Gastrocnemius medialis (tissue), 4 donors: ENCODE measurements at regions of chr1 and their contacts with region 1.

Region 1: GRCh38 chr1:202710070-202711045 is at the start of gene SYT2:
- DNase-seq: no peak
- ATAC-seq: no peak
- H3K4me3 ChIP-seq: peak within 1 kb of the TSS in 3 of 4 donors; percentile 15 to 38 (median 31)
- H3K27ac ChIP-seq: no peak within 1 kb of the TSS
- H3K4me1 ChIP-seq: peaks cover 0 to 11% of the 10 kb centered on the region in 2 donors
- H3K27me3 ChIP-seq: peaks cover 47 to 52% (median 52%) of the 10 kb centered on the region in 3 donors
- CTCF ChIP-seq: no peak
- POLR2A ChIP-seq: no peak
- total RNA-seq, gene SYT2: not detected

Region 2: GRCh38 chr1:202170726-202171125 is 539.6 kb before region 1 on chr1:
- in situ Hi-C with region 1: loop called in 1 of 4 experiments (anchors 10 kb)
- intact Hi-C with region 1: no loop called
- DNase-seq: no peak
- ATAC-seq: peak in 1 of 2 donors; percentile 22
- H3K4me3 ChIP-seq: no peak overlapping the region
- H3K27ac ChIP-seq: no peak overlapping the region
- H3K4me1 ChIP-seq: no peaks in the 10 kb centered on the region
- H3K27me3 ChIP-seq: no peaks in the 10 kb centered on the region
- CTCF ChIP-seq: no peak
- POLR2A ChIP-seq: no peak

Region 3: DNA sequence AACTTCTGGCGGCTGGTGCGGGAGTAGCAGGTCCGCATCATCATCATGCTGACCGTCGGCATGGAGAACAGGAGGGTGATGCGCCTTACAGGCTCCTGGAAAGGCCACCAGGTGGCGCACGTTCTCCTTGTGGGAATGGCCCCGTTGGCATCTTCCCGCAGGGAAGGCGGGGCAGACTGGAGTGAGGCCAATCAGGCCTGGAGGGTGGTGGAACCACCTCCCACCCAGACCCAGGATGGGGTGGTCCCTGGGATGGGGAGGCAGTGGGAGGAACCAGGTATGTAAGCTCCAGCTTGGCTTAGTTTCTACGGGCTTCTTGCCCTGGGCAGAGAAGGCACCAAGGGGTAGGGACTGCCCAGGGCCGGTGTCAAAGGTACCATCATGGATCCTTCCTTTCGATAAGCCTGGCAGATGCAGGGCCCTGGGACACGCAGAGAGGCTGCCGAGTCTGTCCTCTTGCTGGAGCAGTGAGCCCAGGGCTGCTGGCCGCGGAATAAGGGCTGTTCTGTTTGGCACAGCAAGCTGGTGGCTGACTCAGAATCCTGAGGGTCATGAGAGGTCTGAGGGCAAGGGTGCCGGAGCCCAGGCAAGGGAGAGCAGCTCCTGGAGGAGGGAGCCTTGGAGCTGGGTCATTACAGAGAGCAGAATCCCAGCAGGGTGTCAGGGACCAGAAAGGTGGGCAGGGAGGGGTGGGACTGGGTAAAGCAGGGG is 525.5 kb before region 1 on chr1:
- in situ Hi-C with region 1: loop called in 2 of 4 experiments (anchors 10 kb)
- intact Hi-C with region 1: no loop called
- DNase-seq: peak; percentile 35 to 62
- ATAC-seq: peak; percentile 66 to 68
- H3K4me3 ChIP-seq: no peak overlapping the region
- H3K27ac ChIP-seq: no peak overlapping the region
- H3K4me1 ChIP-seq: no peaks in the 10 kb centered on the region
- H3K27me3 ChIP-seq: no peaks in the 10 kb centered on the region
- CTCF ChIP-seq: peak; percentile 25 to 90 (median 68)
- POLR2A ChIP-seq: no peak

Region 4: DNA sequence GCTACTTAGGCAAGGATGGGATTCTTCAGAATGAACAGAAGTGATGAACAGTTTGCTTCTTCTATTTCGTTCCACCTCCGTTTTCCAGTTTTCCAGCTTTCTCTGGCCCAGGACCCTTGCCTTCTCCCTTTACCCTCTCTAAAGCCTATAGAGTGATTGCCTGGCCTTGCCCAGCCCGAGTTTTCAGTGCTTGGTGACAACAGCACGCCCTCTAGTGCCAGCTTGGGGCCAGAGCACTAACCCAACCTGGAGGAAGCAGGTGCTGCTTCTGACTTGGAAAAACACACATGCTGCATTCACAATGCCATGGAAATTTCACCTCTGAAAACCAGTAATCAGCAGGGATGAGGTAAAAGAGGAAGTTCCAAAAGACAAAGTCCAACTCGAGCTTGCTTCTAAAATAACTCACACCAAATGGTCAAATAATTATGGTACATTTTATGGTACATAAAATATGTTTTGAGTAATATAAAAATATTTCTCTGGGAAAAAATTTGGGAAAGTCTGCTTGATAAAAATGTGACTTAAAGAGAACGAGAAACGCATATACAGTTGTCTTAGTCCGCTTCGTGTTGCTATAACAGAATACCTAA is 394.7 kb before region 1 on chr1:
- in situ Hi-C with region 1: loop called in 1 of 4 experiments (anchors 25 kb)
- intact Hi-C with region 1: no loop called
- DNase-seq: peak; percentile 45 to 59
- ATAC-seq: peak; percentile 83 to 91
- H3K4me3 ChIP-seq: no peak overlapping the region
- H3K27ac ChIP-seq: no peak overlapping the region
- H3K4me1 ChIP-seq: peaks cover 0 to 4% of the 10 kb centered on the region in 2 donors
- H3K27me3 ChIP-seq: no peaks in the 10 kb centered on the region
- CTCF ChIP-seq: peak; percentile 70 to 91 (median 82)
- POLR2A ChIP-seq: no peak

Region 5: GRCh38 chr1:202348509-202349205 is 361.7 kb before region 1 on chr1 and contains the start of gene PPP1R12B:
- in situ Hi-C with region 1: loop called in 3 of 4 experiments (anchors 25 kb)
- intact Hi-C with region 1: loop called (anchors 10 kb)
- DNase-seq: peak; percentile 99
- ATAC-seq: peak; percentile 91
- H3K4me3 ChIP-seq: peak within 1 kb of the TSS; percentile 85 to 94 (median 86)
- H3K27ac ChIP-seq: peak within 1 kb of the TSS; percentile 89 to 97 (median 97)
- H3K4me1 ChIP-seq: peaks cover 44 to 46% of the 10 kb centered on the region in 2 donors
- H3K27me3 ChIP-seq: no peaks in the 10 kb centered on the region
- CTCF ChIP-seq: no peak
- POLR2A ChIP-seq: peak; percentile 91 to 93
- total RNA-seq, gene PPP1R12B: 127 to 207 (median 139) TPM

Region 6: GRCh38 chr1:202471246-202471645 is 239.1 kb before region 1 on chr1:
- in situ Hi-C with region 1: loop called in 1 of 4 experiments (anchors 25 kb)
- intact Hi-C with region 1: loop called (anchors 10 kb)
- DNase-seq: no peak
- ATAC-seq: no peak
- H3K4me3 ChIP-seq: no peak overlapping the region
- H3K27ac ChIP-seq: peak overlapping the region in 2 of 4 donors; percentile 25 to 32
- H3K4me1 ChIP-seq: peaks cover 37 to 41% of the 10 kb centered on the region in 2 donors
- H3K27me3 ChIP-seq: no peaks in the 10 kb centered on the region
- CTCF ChIP-seq: no peak
- POLR2A ChIP-seq: no peak

Region 7: DNA sequence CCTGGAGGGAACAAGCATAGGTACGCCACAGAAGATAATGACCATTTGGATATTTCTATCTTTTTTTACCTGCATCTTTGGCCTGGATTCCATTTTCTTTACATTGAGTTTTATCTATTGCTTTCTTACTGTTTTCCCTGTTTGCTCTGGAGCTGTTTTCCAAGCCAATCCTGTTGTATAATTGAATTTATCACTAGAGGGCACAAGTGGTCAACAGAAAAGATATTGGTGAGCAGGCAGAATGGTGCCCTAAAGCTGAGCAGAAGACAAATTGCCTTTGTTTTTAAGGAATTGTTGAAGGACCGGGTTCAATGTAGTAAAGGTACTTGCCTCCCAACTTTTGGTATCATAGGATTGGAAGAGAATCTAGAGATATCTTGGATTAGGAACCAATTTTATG is 209.1 kb before region 1 on chr1:
- in situ Hi-C with region 1: loop called in 1 of 4 experiments (anchors 25 kb)
- intact Hi-C with region 1: no loop called
- DNase-seq: no peak
- ATAC-seq: no peak
- H3K4me3 ChIP-seq: no peak overlapping the region
- H3K27ac ChIP-seq: no peak overlapping the region
- H3K4me1 ChIP-seq: peaks cover 12 to 16% of the 10 kb centered on the region in 2 donors
- H3K27me3 ChIP-seq: no peaks in the 10 kb centered on the region
- CTCF ChIP-seq: peak; percentile 31 to 50 (median 42)
- POLR2A ChIP-seq: no peak

Region 8: GRCh38 chr1:202745323-202745888 is 35.0 kb after region 1 on chr1:
- in situ Hi-C with region 1: no loop called
- intact Hi-C with region 1: no loop called
- DNase-seq: no peak
- ATAC-seq: no peak
- H3K4me3 ChIP-seq: no peak overlapping the region
- H3K27ac ChIP-seq: no peak overlapping the region
- H3K4me1 ChIP-seq: no peaks in the 10 kb centered on the region
- H3K27me3 ChIP-seq: no peaks in the 10 kb centered on the region
- CTCF ChIP-seq: no peak
- POLR2A ChIP-seq: no peak